ENCODE measurements at regions of chr3 and their contacts with region 1.

Region 1: DNA sequence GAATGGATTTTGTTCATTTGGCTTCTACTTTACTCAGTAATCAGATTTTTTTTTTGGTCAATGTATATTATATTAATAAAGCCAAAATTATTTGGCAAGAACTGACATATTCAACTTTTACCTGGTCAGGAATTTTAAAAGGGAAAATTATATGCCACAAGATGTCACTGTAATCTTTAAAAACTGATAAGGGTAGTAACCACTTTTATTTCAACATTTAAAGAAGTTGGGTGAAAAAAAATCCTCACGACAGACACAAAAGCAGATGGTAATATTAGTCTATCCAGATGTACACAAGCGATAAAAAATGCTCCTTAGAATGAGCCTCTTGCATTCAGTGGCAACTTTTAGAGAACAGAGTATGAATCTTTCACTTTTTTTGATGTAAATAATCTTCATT is 101.9 kb downstream of the SERPINI1 start:
- DNase-seq: no peak
- ATAC-seq: no peak
- H3K4me3 ChIP-seq: no peak overlapping the region
- H3K27ac ChIP-seq: no peak overlapping the region
- H3K4me1 ChIP-seq: no peaks in the 10 kb centered on the region
- H3K27me3 ChIP-seq: no peaks in the 10 kb centered on the region
- CTCF ChIP-seq: peak; percentile 33

Region 2: DNA sequence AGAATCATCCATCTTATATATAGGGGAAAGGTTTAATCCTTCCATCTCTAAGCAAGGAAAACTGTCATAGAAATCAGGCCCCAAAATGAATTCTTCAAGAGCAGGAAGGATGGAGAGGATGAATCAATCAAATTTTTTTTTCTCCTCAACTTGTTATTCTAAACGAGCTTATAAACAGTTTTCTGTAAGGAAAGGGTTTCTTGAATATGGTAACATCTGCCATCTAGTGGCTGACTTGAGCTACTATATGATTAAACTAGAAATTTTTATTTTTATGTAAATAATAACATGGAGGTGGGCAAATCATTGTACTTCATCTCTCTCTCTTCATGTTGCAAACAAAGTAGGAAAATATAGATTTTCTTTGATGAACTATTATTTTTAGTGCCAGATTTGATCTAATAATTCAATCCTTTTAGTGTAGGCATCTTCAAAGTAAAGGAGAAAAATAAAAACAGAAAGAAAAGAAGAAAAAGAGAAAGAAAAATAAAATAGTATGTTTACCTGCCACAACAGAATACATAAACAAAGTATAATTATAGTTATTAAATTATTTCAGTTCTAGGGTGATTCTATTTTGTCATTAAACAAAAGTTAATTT is 44.7 kb after region 1 on chr3:
- intact Hi-C with region 1: loop called in 1 of 2 experiments (anchors 5 kb)
- DNase-seq: no peak
- ATAC-seq: no peak
- H3K4me3 ChIP-seq: no peak overlapping the region
- H3K27ac ChIP-seq: no peak overlapping the region
- H3K4me1 ChIP-seq: peaks cover under 1% of the 10 kb centered on the region
- H3K27me3 ChIP-seq: no peaks in the 10 kb centered on the region
- CTCF ChIP-seq: peak; percentile 79